Caco-2 (cell line): ENCODE measurements at regions of chr2 and their contacts with region 1.

Region 1: GRCh38 chr2:10597935-10598334 is 91.8 kb downstream of the NOL10 start:
- DNase-seq: peak in 1 of 2 experiments; percentile 34
- H3K4me3 ChIP-seq: no peak overlapping the region
- H3K4me3 Mint-ChIP-seq: peak overlapping the region; percentile 39
- H3K27ac Mint-ChIP-seq: peak overlapping the region; percentile 72
- H3K4me1 ChIP-seq: peaks cover 46% of the 10 kb centered on the region
- H3K4me1 Mint-ChIP-seq: peaks cover 33% of the 10 kb centered on the region
- H3K27me3 ChIP-seq: no peaks in the 10 kb centered on the region
- H3K27me3 Mint-ChIP-seq: no peaks in the 10 kb centered on the region
- CTCF ChIP-seq: no peak

Region 2: GRCh38 chr2:10610213-10610910 is 12.4 kb after region 1 on chr2:
- CTCF ChIA-PET with region 1: interaction called, 3 read pairs
- POLR2A ChIA-PET with region 1: no interaction called
- intact Hi-C with region 1: loop called (anchors 1 kb)
- DNase-seq: peak; percentile 40 to 74
- H3K4me3 ChIP-seq: no peak overlapping the region
- H3K4me3 Mint-ChIP-seq: no peak overlapping the region
- H3K27ac Mint-ChIP-seq: peak overlapping the region; percentile 6
- H3K4me1 ChIP-seq: peaks cover 13% of the 10 kb centered on the region
- H3K4me1 Mint-ChIP-seq: no peaks in the 10 kb centered on the region
- H3K27me3 ChIP-seq: no peaks in the 10 kb centered on the region
- H3K27me3 Mint-ChIP-seq: no peaks in the 10 kb centered on the region
- CTCF ChIP-seq: no peak

Region 3: GRCh38 chr2:10659898-10660568 is 62.1 kb after region 1 on chr2:
- CTCF ChIA-PET with region 1: no interaction called
- POLR2A ChIA-PET with region 1: no interaction called
- intact Hi-C with region 1: no loop called
- DNase-seq: peak; percentile 67 to 76
- H3K4me3 ChIP-seq: no peak overlapping the region
- H3K4me3 Mint-ChIP-seq: no peak overlapping the region
- H3K27ac Mint-ChIP-seq: no peak overlapping the region
- H3K4me1 ChIP-seq: peaks cover 9% of the 10 kb centered on the region
- H3K4me1 Mint-ChIP-seq: peaks cover 7% of the 10 kb centered on the region
- H3K27me3 ChIP-seq: no peaks in the 10 kb centered on the region
- H3K27me3 Mint-ChIP-seq: no peaks in the 10 kb centered on the region
- CTCF ChIP-seq: peak; percentile 76 to 86